Transverse colon (tissue), 4 donors: ENCODE measurements at regions of chr6 and their contacts with region 1.

Region 1: DNA sequence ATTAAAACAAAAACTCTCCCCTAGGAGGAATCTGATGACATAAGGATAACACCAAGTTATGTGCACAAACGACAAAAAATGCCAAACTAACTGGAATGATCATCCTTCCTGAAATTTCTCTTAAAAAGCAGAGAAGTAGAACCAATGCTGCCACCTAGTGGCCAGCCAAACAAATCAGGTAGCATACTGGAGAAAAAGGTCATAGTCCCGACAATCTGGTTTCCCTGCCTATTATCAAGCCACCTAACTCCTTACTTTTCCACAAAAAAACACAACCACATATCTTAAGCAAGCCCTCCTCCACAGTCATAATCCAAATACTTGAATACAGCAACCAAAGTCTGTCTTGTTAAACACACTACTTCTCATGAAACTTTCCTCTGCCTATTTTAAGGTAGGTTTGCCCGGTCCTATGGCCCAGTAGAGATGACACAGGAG is 5.3 kb downstream of the OARD1 start:
- DNase-seq: peak; percentile 83
- H3K4me3 ChIP-seq: no peak overlapping the region
- H3K27ac ChIP-seq: peak overlapping the region in 2 of 4 donors; percentile 66 to 70
- H3K4me1 ChIP-seq: peaks cover 9 to 54% (median 33%) of the 10 kb centered on the region in 4 donors
- H3K27me3 ChIP-seq: no peaks in the 10 kb centered on the region
- CTCF ChIP-seq: peak; percentile 83 to 89 (median 87)
- EP300 ChIP-seq: no peak
- POLR2A ChIP-seq: no peak

Region 2: DNA sequence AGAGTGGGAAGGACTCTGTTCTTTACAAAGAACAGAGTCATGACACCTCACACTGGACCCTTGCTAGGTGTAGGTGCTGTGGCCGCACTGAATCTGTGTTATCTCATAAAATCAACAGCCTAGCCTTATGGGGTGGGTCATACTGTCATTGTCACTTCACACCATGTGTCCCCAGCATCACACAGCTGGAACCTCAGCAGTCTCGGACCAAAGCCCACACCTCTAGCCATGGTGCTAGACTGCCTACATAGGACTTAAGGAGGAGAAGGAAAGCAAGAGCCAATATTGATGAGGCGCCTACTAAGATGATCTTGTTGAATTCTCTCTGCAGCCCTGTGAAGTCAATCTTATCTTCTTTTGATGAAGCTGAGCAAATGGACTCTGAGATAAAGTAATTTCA is 58.9 kb before region 1 on chr6:
- in situ Hi-C with region 1: no loop called
- intact Hi-C with region 1: loop called (anchors 5 kb)
- DNase-seq: no peak
- H3K4me3 ChIP-seq: no peak overlapping the region
- H3K27ac ChIP-seq: no peak overlapping the region
- H3K4me1 ChIP-seq: no peaks in the 10 kb centered on the region
- H3K27me3 ChIP-seq: no peaks in the 10 kb centered on the region
- CTCF ChIP-seq: no peak
- EP300 ChIP-seq: no peak
- POLR2A ChIP-seq: no peak